GM10248 (cell line): ENCODE measurements at regions of chr5 and their contacts with region 1.

Region 1: DNA sequence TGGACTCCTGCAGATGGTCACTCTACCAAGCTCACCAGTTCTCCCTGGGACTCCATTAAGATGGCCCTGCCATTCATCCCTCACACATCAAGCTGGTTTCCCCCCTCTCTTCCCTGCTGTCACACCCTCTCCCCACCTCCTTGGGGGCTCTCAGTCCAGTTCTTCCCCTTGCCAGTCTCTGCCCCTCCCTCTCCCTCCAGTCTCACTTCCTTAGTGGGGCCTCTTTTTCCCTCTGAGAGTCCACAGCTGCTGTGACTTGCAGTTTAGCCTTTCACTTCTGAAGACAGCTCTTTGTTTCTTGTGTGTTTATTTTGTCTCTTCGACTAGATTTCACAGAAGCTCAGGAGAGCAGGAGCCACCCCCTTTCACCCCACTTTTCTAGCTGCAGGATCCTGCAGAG is 10.5 kb downstream of the DOCK2 start:
- DNase-seq: peak; percentile 48
- CTCF ChIP-seq: no peak

Region 2: GRCh38 chr5:169637085-169637548 is 10.4 kb before region 1 on chr5 and contains the start of gene DOCK2:
- CTCF ChIA-PET with region 1: interaction called, 13 read pairs
- POLR2A ChIA-PET with region 1: no interaction called
- DNase-seq: peak; percentile 89
- CTCF ChIP-seq: no peak